OCI-LY7 (cell line): ENCODE measurements at regions of chr5 and their contacts with region 1.

Region 1: DNA sequence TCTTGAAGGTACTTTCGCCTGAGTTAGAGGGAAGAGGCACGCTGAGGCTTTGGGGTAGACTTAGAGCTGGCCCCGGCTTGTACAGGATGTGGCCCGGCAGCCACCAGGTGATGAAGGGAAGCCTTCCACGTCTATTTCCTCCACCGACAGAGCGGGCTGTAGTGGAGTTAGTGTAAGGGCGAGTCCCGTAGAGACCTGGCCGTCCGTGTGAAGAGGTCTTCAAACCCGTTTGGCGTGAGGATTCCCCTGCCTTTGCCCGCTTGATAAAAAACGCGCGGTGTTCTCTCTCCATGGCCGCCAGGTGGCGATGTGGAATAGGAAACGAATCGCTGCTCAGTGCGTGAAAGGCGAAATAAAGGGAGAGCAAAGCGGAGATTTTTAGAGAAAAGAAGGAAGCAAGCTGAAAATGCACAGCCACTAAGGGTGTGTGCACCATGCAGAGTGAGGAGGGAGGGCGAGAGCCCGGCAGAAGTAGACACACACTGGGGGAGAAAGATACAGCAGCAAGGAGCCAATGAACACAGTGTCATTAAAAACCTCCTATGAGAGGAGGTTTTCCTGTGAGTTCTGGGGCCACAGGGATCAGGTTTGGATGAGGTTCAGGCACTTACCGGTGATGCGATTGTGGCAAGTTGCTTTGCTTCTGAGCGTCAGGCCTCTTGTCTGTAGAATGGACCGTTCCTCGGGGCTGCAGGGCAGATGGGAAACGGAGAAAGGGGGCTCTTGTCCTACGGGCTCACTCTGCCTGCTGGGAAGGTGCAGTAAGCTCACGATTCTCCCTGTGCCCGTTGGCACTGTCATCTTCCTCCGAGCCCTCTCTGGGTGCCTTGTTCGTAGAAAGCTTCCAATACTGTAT is 34.2 kb downstream of the STC2 start:
- DNase-seq: peak; percentile 75
- H3K4me3 ChIP-seq: no peak overlapping the region
- H3K27ac ChIP-seq: no peak overlapping the region
- H3K4me1 ChIP-seq: no peaks in the 10 kb centered on the region
- CTCF ChIP-seq: peak; percentile 95

Region 2: GRCh38 chr5:173331956-173332479 is 38.0 kb after region 1 on chr5:
- CTCF ChIA-PET with region 1: interaction called, 3 read pairs
- POLR2A ChIA-PET with region 1: no interaction called
- intact Hi-C with region 1: loop called (anchors 1 kb)
- DNase-seq: peak; percentile 82
- H3K4me3 ChIP-seq: no peak overlapping the region
- H3K27ac ChIP-seq: no peak overlapping the region
- H3K4me1 ChIP-seq: no peaks in the 10 kb centered on the region
- CTCF ChIP-seq: peak; percentile 90

Region 3: GRCh38 chr5:173420108-173420507 is 126.1 kb after region 1 on chr5:
- CTCF ChIA-PET with region 1: no interaction called
- POLR2A ChIA-PET with region 1: no interaction called
- intact Hi-C with region 1: no loop called
- DNase-seq: no peak
- H3K4me3 ChIP-seq: no peak overlapping the region
- H3K27ac ChIP-seq: no peak overlapping the region
- H3K4me1 ChIP-seq: no peaks in the 10 kb centered on the region
- CTCF ChIP-seq: no peak

Region 4: GRCh38 chr5:173573126-173573960 is 279.3 kb after region 1 on chr5:
- CTCF ChIA-PET with region 1: no interaction called
- POLR2A ChIA-PET with region 1: no interaction called
- intact Hi-C with region 1: loop called (anchors 1 kb)
- DNase-seq: peak; percentile 56
- H3K4me3 ChIP-seq: no peak overlapping the region
- H3K27ac ChIP-seq: no peak overlapping the region
- H3K4me1 ChIP-seq: no peaks in the 10 kb centered on the region
- CTCF ChIP-seq: peak; percentile 97